ENCODE measurements at regions of chr20 and their contacts with region 1.

Region 1: GRCh38 chr20:17617551-17618223 is 47.8 kb downstream of the DSTN start:
- DNase-seq: peak in 2 of 3 donors; percentile 58 to 60
- ATAC-seq: no peak
- H3K4me3 ChIP-seq: no peak overlapping the region
- H3K4me1 ChIP-seq: peaks cover 16% of the 10 kb centered on the region
- CTCF ChIP-seq: peak; percentile 9

Region 2: DNA sequence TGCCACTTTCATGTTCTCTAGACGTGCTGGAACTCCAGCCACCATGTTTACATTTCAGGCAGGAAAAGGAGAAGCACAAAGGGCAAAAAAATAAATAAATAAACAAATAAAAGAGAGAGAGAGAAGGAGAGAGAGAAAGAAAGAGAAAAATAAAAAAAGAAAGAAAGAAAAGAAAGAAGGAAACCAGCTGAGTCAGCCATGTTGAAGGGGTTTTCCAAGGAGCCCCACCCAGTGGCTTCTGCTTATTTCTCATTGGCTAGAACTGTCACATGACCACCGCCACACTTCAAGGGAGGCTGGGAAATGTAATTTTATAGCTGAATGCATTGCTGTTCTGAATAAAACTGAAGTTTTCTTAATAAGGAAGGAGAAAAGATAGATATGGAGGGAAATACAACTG is 157.6 kb before region 1 on chr20:
- intact Hi-C with region 1: no loop called
- DNase-seq: no peak
- ATAC-seq: no peak
- H3K4me3 ChIP-seq: no peak overlapping the region
- H3K4me1 ChIP-seq: no peaks in the 10 kb centered on the region
- CTCF ChIP-seq: no peak

Region 3: GRCh38 chr20:17504898-17505635 is 112.6 kb before region 1 on chr20:
- intact Hi-C with region 1: loop called in 1 of 2 experiments (anchors 10 kb)
- DNase-seq: peak; percentile 69 to 78 (median 75)
- ATAC-seq: peak; percentile 86
- H3K4me3 ChIP-seq: no peak overlapping the region
- H3K4me1 ChIP-seq: peaks cover 5% of the 10 kb centered on the region
- CTCF ChIP-seq: peak; percentile 41

Region 4: DNA sequence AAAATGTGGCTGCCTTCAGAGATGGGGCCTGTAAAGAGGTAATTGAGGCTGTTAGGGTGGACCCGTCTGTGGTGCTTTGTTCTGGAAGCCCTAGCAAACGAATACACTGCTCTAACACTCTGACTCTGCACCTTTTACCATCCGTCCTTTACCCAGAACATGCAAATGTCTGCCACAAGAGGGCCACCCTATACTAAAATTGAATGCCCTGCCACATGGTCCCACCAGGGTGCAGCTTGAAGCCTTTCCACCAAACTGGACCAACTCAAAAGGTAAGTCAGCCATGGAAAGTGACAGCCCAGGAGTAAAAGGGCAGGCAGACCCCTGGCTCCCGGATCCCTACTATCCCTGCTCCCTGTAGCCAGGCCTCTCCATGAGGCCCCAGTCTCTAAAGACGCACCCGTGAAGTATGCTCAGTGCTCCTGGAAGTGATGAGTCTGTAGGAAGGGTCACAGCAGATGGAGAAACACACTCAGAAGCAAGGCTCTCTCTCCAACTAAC is 80.7 kb before region 1 on chr20:
- intact Hi-C with region 1: loop called (anchors 10 kb)
- DNase-seq: peak in 2 of 3 donors; percentile 55 to 88
- ATAC-seq: peak; percentile 96
- H3K4me3 ChIP-seq: no peak overlapping the region
- H3K4me1 ChIP-seq: peaks cover 2% of the 10 kb centered on the region
- CTCF ChIP-seq: peak; percentile 62

Measured in mucosa of descending colon (tissue), 3 donors.